ENCODE measurements at regions of chr6 and their contacts with region 1.

Region 1: GRCh38 chr6:43174263-43175112 is 3.4 kb downstream of the SRF start:
- DNase-seq: peak; percentile 89 to 97 (median 91)
- H3K4me3 ChIP-seq: peak overlapping the region; percentile 22 to 49
- H3K4me3 Mint-ChIP-seq: peak overlapping the region; percentile 77 to 99 (median 93)
- H3K27ac ChIP-seq: peak overlapping the region; percentile 83
- H3K27ac Mint-ChIP-seq: peak overlapping the region; percentile 93 to 98 (median 97)
- H3K4me1 ChIP-seq: peaks cover 47% of the 10 kb centered on the region
- H3K4me1 Mint-ChIP-seq: peaks cover 29 to 56% (median 42%) of the 10 kb centered on the region in 4 donors
- H3K27me3 ChIP-seq: no peaks in the 10 kb centered on the region
- H3K27me3 Mint-ChIP-seq: no peaks in the 10 kb centered on the region

Region 2: GRCh38 chr6:41787219-41787917 is 1387.1 kb before region 1 on chr6 and contains the start of gene TOMM6:
- CTCF ChIA-PET with region 1: no interaction called
- POLR2A ChIA-PET with region 1: no interaction called
- intact Hi-C with region 1: loop called (anchors 10 kb)
- DNase-seq: peak; percentile 93 to 95 (median 94)
- H3K4me3 ChIP-seq: peak within 1 kb of the TSS; percentile 84 to 100
- H3K4me3 Mint-ChIP-seq: peak within 1 kb of the TSS; percentile 95 to 99 (median 98)
- H3K27ac ChIP-seq: peak within 1 kb of the TSS; percentile 90
- H3K27ac Mint-ChIP-seq: peak within 1 kb of the TSS; percentile 92 to 98 (median 98)
- H3K4me1 ChIP-seq: peaks cover 16% of the 10 kb centered on the region
- H3K4me1 Mint-ChIP-seq: peaks cover 7 to 29% (median 12%) of the 10 kb centered on the region in 4 donors
- H3K27me3 ChIP-seq: no peaks in the 10 kb centered on the region
- H3K27me3 Mint-ChIP-seq: peaks cover 0 to 3% of the 10 kb centered on the region in 2 donors
- total RNA-seq, gene TOMM6: 118 to 126 TPM

Region 3: GRCh38 chr6:42819803-42820511 is 354.5 kb before region 1 on chr6:
- CTCF ChIA-PET with region 1: no interaction called
- POLR2A ChIA-PET with region 1: no interaction called
- intact Hi-C with region 1: no loop called
- DNase-seq: peak in 4 of 5 donors; percentile 17 to 24 (median 22)
- H3K4me3 ChIP-seq: no peak overlapping the region
- H3K4me3 Mint-ChIP-seq: peak overlapping the region in 2 of 8 donors; percentile 11 to 34
- H3K27ac ChIP-seq: no peak overlapping the region
- H3K27ac Mint-ChIP-seq: peak overlapping the region; percentile 35 to 79 (median 57)
- H3K4me1 ChIP-seq: peaks cover 15% of the 10 kb centered on the region
- H3K4me1 Mint-ChIP-seq: peaks cover 16 to 30% (median 25%) of the 10 kb centered on the region in 4 donors
- H3K27me3 ChIP-seq: no peaks in the 10 kb centered on the region
- H3K27me3 Mint-ChIP-seq: no peaks in the 10 kb centered on the region

Region 4: DNA sequence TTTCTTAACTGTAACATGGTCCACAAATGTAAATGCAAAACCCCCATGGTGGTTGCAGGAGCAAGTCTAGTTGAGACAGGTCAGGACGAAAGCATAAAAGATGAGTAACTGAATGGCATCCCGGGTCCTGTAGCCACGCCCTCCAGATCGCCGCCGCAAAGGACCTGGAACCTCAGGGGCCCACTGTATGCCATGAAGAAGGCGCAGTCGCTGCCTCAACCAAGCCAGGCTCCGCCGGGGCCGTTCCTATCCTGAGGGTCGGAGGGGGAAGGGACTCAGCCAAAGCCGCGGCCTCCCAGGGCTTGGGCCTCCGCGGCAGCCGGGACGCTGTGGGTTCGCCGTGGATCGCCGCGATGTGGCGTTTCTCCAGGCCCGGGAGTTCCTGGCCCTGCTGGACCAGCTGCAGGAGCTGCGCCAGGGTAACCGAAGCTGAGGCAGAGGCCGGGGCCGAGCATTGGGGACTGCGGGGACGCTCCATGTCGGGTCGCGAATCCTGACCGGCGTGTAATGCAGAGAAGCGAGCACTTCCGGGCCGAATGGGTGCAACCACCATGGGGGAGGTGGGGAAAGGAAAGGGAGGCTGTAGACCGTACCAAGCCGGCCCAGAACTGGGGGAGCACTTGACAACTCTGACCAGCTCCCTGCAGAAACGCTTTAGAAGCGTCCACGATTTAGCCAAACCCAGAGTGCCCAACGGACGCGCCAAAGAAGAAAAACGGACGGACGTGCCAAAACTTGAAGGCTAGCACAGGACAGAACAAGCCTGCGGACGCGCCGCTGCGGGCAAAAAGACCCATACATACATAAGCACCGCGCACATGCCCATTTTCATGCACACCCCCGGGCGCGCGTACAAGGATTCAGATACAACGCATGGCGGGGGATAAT is 283.9 kb before region 1 on chr6:
- CTCF ChIA-PET with region 1: no interaction called
- POLR2A ChIA-PET with region 1: interaction called, 11 read pairs
- intact Hi-C with region 1: no loop called
- DNase-seq: peak; percentile 87 to 91 (median 89)
- H3K4me3 ChIP-seq: peak overlapping the region; percentile 59 to 97
- H3K4me3 Mint-ChIP-seq: peak overlapping the region; percentile 94 to 99 (median 98)
- H3K27ac ChIP-seq: peak overlapping the region; percentile 92
- H3K27ac Mint-ChIP-seq: peak overlapping the region; percentile 93 to 99 (median 97)
- H3K4me1 ChIP-seq: peaks cover 15% of the 10 kb centered on the region
- H3K4me1 Mint-ChIP-seq: peaks cover 9 to 21% (median 12%) of the 10 kb centered on the region in 4 donors
- H3K27me3 ChIP-seq: no peaks in the 10 kb centered on the region
- H3K27me3 Mint-ChIP-seq: no peaks in the 10 kb centered on the region

Region 5: GRCh38 chr6:43013843-43014433 is 160.6 kb before region 1 on chr6 and contains the starts of genes KLHDC3 and MEA1:
- CTCF ChIA-PET with region 1: no interaction called
- POLR2A ChIA-PET with region 1: no interaction called
- intact Hi-C with region 1: loop called (anchors 1 kb)
- DNase-seq: peak; percentile 98 to 100 (median 100)
- H3K4me3 ChIP-seq: peak within 1 kb of the TSS; percentile 75 to 84
- H3K4me3 Mint-ChIP-seq: peak within 1 kb of the TSS; percentile 91 to 97 (median 94)
- H3K27ac ChIP-seq: peak within 1 kb of the TSS; percentile 71
- H3K27ac Mint-ChIP-seq: peak within 1 kb of the TSS; percentile 75 to 98 (median 94)
- H3K4me1 ChIP-seq: peaks cover 54% of the 10 kb centered on the region
- H3K4me1 Mint-ChIP-seq: peaks cover 39 to 71% (median 56%) of the 10 kb centered on the region in 4 donors
- H3K27me3 ChIP-seq: no peaks in the 10 kb centered on the region
- H3K27me3 Mint-ChIP-seq: no peaks in the 10 kb centered on the region
- total RNA-seq, gene KLHDC3: 66.6 to 67.9 TPM
- total RNA-seq, gene MEA1: 36.2 to 36.3 TPM

Region 6: DNA sequence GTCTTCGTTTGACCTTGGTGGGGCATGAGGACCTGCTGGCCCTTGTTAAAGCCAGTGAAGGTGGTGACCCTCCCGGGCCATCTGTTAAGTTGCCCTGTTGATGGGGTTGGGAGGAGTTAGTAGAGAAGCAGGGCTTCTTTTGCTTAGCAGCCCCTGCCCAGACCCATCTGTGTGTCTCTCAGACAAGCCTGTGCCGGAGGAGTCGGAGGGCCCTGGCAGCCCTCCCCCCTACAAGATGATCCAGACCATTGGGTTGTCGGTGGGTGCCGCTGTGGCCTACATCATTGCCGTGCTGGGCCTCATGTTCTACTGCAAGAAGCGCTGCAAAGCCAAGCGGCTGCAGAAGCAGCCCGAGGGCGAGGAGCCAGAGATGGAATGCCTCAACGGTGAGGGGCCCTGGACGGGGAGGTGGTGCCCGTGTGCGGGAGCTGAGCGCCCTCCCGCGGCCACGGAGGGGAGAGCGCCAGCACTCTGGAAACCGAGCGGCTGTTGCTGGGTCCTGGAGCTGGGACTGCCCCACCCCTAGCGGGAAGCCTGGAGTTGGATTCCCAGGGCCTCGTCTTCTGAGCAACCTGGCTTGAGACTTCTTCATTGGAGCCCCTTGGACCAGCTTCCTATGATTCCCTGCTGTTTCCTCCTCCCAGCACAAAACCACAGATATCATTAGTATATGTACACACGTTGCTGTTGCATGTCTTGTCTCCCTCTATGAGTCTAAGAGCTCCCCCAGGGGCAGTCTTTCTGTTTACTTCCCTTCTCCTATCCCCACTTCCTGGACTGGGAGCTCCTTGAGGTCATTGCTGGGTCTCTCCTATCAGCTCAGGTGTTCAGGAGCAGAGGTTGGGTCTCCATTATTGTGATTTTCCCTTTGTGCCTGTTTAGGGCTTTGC is 31.0 kb before region 1 on chr6:
- CTCF ChIA-PET with region 1: interaction called, 5 read pairs
- POLR2A ChIA-PET with region 1: no interaction called
- intact Hi-C with region 1: loop called (anchors 2 kb)
- DNase-seq: peak; percentile 67 to 79 (median 71)
- H3K4me3 ChIP-seq: no peak overlapping the region
- H3K4me3 Mint-ChIP-seq: peak overlapping the region in 3 of 8 donors; percentile 39 to 69 (median 43)
- H3K27ac ChIP-seq: no peak overlapping the region
- H3K27ac Mint-ChIP-seq: peak overlapping the region in 1 of 7 donors; percentile 85
- H3K4me1 ChIP-seq: peaks cover 12% of the 10 kb centered on the region
- H3K4me1 Mint-ChIP-seq: peaks cover 1 to 11% (median 3%) of the 10 kb centered on the region in 4 donors
- H3K27me3 ChIP-seq: no peaks in the 10 kb centered on the region
- H3K27me3 Mint-ChIP-seq: peaks cover 0 to 1% of the 10 kb centered on the region in 2 donors

Region 7: DNA sequence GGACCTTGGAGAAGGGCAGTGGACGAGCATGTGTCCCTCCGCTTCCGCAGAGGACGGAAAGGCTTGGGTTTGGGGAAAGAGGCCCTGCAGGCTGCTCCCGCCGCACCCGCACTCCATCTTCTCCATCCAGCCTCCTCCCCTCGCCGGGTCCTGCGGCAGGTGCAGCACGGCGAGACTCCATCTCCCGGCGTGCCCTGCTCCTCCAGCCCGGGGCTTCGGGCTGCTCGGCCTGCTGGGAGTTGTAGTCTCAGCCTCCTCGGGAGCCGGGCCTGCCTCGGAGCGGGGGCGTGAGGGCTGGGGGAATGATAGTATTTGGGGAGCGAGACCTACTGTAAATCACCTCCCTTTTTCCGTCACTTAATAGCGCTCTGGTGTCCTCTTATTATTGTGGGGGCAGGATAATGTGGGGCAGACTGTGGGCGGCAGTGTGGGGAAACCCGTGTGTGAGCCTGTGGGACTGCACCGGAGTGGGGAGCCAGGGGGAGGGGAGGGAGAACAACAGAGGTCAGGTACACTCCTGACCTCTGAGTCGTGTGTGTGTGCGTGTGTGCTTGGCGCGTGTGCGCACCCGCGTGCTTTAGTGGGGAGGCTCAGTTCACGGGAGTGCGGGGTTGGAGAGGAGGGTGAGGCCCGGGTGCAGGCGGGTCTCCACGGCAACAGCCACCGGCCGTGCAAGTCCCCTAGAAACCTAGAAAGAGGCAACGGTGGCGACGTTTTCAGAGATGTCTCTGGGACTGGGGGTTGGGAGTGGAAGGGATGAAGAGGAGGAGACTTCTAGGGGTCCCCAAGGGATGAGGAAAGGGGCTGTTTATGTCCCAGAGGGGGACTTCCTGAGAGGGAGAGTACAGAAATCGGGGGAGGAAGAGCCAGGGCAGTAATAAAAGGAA is 72.9 kb after region 1 on chr6:
- CTCF ChIA-PET with region 1: no interaction called
- POLR2A ChIA-PET with region 1: interaction called, 4 read pairs
- intact Hi-C with region 1: loop called (anchors 1 kb)
- DNase-seq: peak; percentile 77 to 85 (median 80)
- H3K4me3 ChIP-seq: peak overlapping the region; percentile 70 to 82
- H3K4me3 Mint-ChIP-seq: peak overlapping the region in 7 of 8 donors; percentile 85 to 90 (median 90)
- H3K27ac ChIP-seq: peak overlapping the region; percentile 52
- H3K27ac Mint-ChIP-seq: peak overlapping the region; percentile 86 to 97 (median 93)
- H3K4me1 ChIP-seq: peaks cover 12% of the 10 kb centered on the region
- H3K4me1 Mint-ChIP-seq: peaks cover 8 to 23% (median 13%) of the 10 kb centered on the region in 4 donors
- H3K27me3 ChIP-seq: peaks cover 25% of the 10 kb centered on the region
- H3K27me3 Mint-ChIP-seq: peaks cover 6 to 15% of the 10 kb centered on the region in 2 donors

Region 8: GRCh38 chr6:43506667-43507471 is 332.4 kb after region 1 on chr6:
- CTCF ChIA-PET with region 1: no interaction called
- POLR2A ChIA-PET with region 1: no interaction called
- intact Hi-C with region 1: loop called (anchors 2 kb)
- DNase-seq: peak; percentile 73 to 79 (median 77)
- H3K4me3 ChIP-seq: no peak overlapping the region
- H3K4me3 Mint-ChIP-seq: peak overlapping the region in 1 of 8 donors; percentile 70
- H3K27ac ChIP-seq: peak overlapping the region; percentile 8
- H3K27ac Mint-ChIP-seq: peak overlapping the region in 6 of 7 donors; percentile 31 to 86 (median 69)
- H3K4me1 ChIP-seq: peaks cover 17% of the 10 kb centered on the region
- H3K4me1 Mint-ChIP-seq: peaks cover 8 to 37% (median 18%) of the 10 kb centered on the region in 4 donors
- H3K27me3 ChIP-seq: peaks cover 11% of the 10 kb centered on the region
- H3K27me3 Mint-ChIP-seq: peaks cover 9 to 13% of the 10 kb centered on the region in 2 donors